GM10248 (cell line): ENCODE measurements at regions of chr1 and their contacts with region 1.

Region 1: GRCh38 chr1:181936768-181937581 is 124.5 kb downstream of the ZNF648 start:
- DNase-seq: peak; percentile 75
- CTCF ChIP-seq: peak; percentile 72

Region 2: GRCh38 chr1:181430015-181430885 is 506.7 kb before region 1 on chr1:
- CTCF ChIA-PET with region 1: interaction called, 16 read pairs
- POLR2A ChIA-PET with region 1: no interaction called
- DNase-seq: peak; percentile 35
- CTCF ChIP-seq: no peak

Region 3: GRCh38 chr1:181497870-181498269 is 439.1 kb before region 1 on chr1:
- CTCF ChIA-PET with region 1: interaction called, 13 read pairs
- POLR2A ChIA-PET with region 1: interaction called, 10 read pairs
- DNase-seq: peak; percentile 28
- CTCF ChIP-seq: no peak

Region 4: DNA sequence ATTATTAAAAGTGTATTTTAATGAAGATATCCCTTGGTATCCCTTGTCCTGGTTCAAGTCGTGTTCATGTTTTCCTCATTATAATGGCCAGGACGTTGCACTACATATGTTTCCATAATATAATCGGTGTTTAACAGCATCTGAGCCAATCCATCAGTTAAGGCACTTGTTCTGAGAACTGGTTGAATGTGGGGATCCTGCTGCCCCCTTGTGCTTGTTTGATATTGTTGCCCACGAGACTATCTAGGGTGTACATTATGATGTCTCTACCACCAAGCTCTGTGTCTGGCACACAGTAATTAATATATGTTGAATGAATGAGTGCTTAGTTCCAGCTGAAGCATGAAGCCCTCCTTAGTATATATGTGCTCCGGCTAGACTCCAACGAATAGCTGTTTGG is 260.7 kb before region 1 on chr1:
- CTCF ChIA-PET with region 1: interaction called, 11 read pairs
- POLR2A ChIA-PET with region 1: no interaction called
- DNase-seq: peak; percentile 71
- CTCF ChIP-seq: peak; percentile 39

Region 5: DNA sequence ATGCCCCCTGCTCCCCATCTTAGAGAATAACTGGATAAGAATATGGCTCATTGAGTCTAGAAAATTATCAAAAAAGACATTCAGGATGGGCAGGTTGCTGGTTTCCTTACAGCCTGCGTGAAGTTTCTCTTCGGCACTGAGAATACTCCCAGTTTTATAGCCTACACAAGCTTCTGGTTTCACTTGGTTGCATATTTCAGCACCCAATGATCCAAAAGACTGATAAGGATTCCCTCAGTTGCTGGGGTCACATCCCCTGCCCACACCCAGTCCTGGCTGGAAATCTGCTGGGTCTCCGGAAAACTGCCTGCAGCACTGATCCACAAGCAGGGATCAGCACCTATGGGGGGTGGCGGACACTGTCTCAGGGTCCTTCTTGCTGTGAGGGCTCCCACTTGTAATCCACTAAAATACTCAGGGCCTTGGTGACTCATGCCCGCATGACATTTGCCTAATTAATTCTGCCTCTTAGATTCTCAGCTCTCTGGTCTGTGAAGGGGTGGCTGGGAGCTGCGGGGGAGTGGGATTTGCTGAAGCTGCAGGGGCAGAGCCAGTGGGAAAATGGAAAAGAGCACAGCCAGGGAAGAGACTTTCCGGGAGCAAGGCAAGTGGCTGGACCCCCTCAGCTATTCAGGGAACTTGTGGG is 18.0 kb before region 1 on chr1:
- CTCF ChIA-PET with region 1: interaction called, 27 read pairs
- POLR2A ChIA-PET with region 1: no interaction called
- DNase-seq: no peak
- CTCF ChIP-seq: no peak

Region 6: GRCh38 chr1:181947441-181947840 is 10.5 kb after region 1 on chr1:
- CTCF ChIA-PET with region 1: interaction called, 14 read pairs
- POLR2A ChIA-PET with region 1: no interaction called
- DNase-seq: no peak
- CTCF ChIP-seq: no peak

Region 7: GRCh38 chr1:182185813-182186756 is 249.1 kb after region 1 on chr1:
- CTCF ChIA-PET with region 1: no interaction called
- POLR2A ChIA-PET with region 1: no interaction called
- DNase-seq: no peak
- CTCF ChIP-seq: no peak